ENCODE measurements at regions of chr13 and their contacts with region 1.

Region 1: DNA sequence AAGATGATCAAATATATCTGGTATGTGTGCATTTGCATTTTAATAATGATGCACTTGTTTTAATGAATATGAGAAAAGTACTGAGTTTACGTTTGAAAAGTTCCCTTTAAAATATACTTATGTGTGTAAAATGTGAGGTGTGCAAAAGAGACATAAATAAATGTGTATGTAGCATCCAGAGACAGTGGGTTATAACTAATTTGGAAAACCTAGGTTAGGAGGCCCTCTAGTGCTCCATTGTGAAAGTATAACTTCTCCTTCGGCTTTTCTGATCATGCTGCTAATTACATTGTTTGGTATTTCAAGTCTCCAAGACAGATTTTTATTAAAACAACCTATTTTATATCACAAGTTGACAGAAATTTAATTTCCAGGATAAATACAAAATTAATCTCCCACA is 30.1 kb downstream of the SCEL start:
- DNase-seq: peak in 1 of 2 experiments; percentile 45
- H3K4me3 ChIP-seq: no peak overlapping the region
- H3K4me3 Mint-ChIP-seq: no peak overlapping the region
- H3K27ac Mint-ChIP-seq: no peak overlapping the region
- H3K4me1 ChIP-seq: no peaks in the 10 kb centered on the region
- H3K4me1 Mint-ChIP-seq: no peaks in the 10 kb centered on the region
- H3K27me3 ChIP-seq: no peaks in the 10 kb centered on the region
- H3K27me3 Mint-ChIP-seq: peaks cover 3% of the 10 kb centered on the region
- CTCF ChIP-seq: peak; percentile 59 to 65

Region 2: DNA sequence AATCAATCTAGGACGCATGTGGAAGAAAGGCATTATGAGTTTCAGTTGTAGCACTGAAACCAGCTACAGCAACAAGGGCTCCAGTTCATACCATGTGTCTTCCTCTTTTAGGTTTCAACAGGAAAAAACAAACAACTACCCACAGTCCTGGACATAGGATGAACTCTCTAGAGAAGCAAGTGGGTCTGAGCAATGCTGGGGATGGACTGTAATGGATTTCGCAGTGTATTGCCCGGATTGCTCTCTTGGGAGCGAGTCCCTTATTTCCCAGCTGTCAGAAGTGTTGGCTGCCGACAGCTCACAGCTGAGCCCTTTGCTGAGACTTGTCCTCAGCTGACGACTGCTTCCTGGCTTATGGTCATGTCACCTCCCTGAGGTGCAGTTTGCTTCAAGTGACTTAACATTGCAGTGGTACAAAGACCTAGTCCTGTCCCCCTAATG is 226.7 kb before region 1 on chr13:
- CTCF ChIA-PET with region 1: no interaction called
- POLR2A ChIA-PET with region 1: no interaction called
- intact Hi-C with region 1: loop called (anchors 5 kb)
- DNase-seq: no peak
- H3K4me3 ChIP-seq: no peak overlapping the region
- H3K4me3 Mint-ChIP-seq: no peak overlapping the region
- H3K27ac Mint-ChIP-seq: no peak overlapping the region
- H3K4me1 ChIP-seq: no peaks in the 10 kb centered on the region
- H3K4me1 Mint-ChIP-seq: no peaks in the 10 kb centered on the region
- H3K27me3 ChIP-seq: no peaks in the 10 kb centered on the region; the same call in none of the 2 replicates
- H3K27me3 Mint-ChIP-seq: peaks cover 26% of the 10 kb centered on the region
- CTCF ChIP-seq: no peak

Region 3: GRCh38 chr13:77492982-77493381 is 72.7 kb before region 1 on chr13:
- CTCF ChIA-PET with region 1: interaction called, 10 read pairs
- POLR2A ChIA-PET with region 1: no interaction called
- intact Hi-C with region 1: loop called (anchors 1 kb)
- DNase-seq: peak in 1 of 2 experiments; percentile 41
- H3K4me3 ChIP-seq: no peak overlapping the region
- H3K4me3 Mint-ChIP-seq: no peak overlapping the region
- H3K27ac Mint-ChIP-seq: no peak overlapping the region
- H3K4me1 ChIP-seq: no peaks in the 10 kb centered on the region
- H3K4me1 Mint-ChIP-seq: peaks cover 7% of the 10 kb centered on the region
- H3K27me3 ChIP-seq: no peaks in the 10 kb centered on the region
- H3K27me3 Mint-ChIP-seq: peaks cover 2% of the 10 kb centered on the region
- CTCF ChIP-seq: peak; percentile 35 to 59

Region 4: DNA sequence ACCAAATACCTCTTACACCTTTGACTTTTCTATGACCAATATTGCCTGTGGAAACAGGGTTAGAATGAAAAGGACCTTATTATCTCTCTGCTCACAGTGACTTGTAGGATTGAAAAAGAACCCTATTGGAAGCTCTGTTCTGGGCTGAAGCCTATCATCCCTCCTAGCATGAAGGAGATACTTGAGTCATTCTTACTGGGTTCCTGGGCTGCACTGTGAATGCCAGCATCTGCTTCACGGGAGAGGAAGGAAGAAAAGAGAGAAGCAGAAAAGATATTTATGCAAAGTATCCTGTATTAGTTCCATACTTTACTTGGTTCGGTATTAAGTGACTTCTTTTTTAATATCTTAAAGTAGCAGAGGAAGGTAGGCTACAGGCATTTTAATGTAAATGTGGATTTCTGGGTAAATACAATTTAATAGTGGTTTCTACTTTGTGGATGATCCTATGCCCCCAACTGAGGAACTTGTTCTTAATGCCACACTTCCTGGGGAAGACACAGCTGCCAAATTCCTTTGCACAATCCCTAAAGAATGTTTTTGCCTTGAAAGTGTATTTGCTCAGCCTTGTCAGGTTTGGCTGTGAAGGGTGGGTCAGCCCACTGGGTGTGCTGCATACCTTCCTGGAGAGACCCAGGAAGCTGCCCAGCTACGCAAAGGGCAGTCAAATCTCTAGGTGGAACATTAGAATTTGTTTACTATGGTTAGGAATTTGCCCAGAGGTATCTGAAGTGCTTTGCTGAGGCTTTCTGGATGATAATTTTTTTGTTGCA is 43.9 kb before region 1 on chr13:
- CTCF ChIA-PET with region 1: no interaction called
- POLR2A ChIA-PET with region 1: no interaction called
- intact Hi-C with region 1: loop called (anchors 1 kb)
- DNase-seq: peak; percentile 77 to 85
- H3K4me3 ChIP-seq: no peak overlapping the region
- H3K4me3 Mint-ChIP-seq: no peak overlapping the region
- H3K27ac Mint-ChIP-seq: peak overlapping the region; percentile 86
- H3K4me1 ChIP-seq: peaks cover 23% of the 10 kb centered on the region
- H3K4me1 Mint-ChIP-seq: peaks cover 25% of the 10 kb centered on the region
- H3K27me3 ChIP-seq: no peaks in the 10 kb centered on the region
- H3K27me3 Mint-ChIP-seq: no peaks in the 10 kb centered on the region
- CTCF ChIP-seq: peak in 1 of 2 experiments; percentile 40

Region 5: DNA sequence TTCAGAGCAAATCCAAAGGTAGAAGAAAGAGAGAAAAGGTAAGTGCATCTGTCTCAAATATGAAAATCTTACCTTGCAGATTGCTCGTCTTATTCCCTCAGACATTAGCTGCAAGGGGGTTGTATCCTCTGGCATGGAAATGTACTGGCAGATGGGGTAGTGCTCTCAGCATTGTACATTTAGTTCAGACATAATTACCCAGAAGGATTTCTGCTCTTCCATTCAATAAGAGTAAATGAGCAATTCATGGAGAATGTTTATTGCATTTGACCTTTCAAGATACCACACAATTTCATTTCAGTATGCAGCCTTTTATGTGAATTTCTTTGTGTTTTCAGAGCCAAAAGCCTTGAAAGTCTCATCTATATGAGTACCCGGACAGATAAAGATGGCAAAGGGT is 33.7 kb after region 1 on chr13:
- CTCF ChIA-PET with region 1: no interaction called
- POLR2A ChIA-PET with region 1: no interaction called
- intact Hi-C with region 1: no loop called
- DNase-seq: no peak
- H3K4me3 ChIP-seq: no peak overlapping the region
- H3K4me3 Mint-ChIP-seq: no peak overlapping the region
- H3K27ac Mint-ChIP-seq: no peak overlapping the region
- H3K4me1 ChIP-seq: no peaks in the 10 kb centered on the region
- H3K4me1 Mint-ChIP-seq: no peaks in the 10 kb centered on the region
- H3K27me3 ChIP-seq: no peaks in the 10 kb centered on the region
- H3K27me3 Mint-ChIP-seq: no peaks in the 10 kb centered on the region
- CTCF ChIP-seq: no peak